AG04450 (cell line): ENCODE measurements at regions of chr12 and their contacts with region 1.

Region 1: DNA sequence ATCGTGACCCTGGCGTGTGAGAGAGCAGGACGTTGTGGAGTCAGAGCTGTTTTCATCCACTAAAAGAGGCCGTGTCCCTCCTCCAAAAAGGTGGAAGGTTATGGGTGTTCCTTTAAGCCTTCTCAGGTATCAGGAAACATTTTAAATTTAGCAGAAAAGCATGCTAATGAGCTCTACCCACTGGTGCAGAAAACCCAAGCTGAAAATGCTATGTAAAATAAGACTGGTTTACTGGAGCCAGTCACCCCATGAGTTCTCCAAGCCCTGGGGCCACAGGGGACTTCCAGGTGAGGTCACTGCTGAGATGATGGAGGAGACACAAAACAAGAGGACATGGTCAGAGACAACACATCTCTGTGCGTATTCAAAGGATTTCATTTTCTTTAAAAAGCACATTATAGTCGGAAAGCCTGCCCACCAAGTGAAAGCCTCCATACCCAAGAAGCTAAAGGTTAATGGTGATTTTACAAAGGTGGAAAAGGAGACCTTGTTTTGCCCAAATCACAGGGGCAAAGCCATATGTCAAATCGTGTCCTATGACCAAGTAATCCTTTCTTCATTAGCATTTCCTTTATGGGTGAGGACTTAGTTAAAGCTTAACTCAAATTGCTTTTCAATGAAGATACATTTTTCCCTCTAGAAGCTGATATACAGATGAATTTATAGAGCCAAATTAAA is 14.2 kb downstream of the PRKAB1 start:
- DNase-seq: no peak
- H3K4me3 ChIP-seq: no peak overlapping the region
- H3K27ac ChIP-seq: no peak overlapping the region
- H3K27me3 ChIP-seq: no peaks in the 10 kb centered on the region
- CTCF ChIP-seq: no peak

Region 2: GRCh38 chr12:119649202-119649808 is 32.8 kb before region 1 on chr12:
- CTCF ChIA-PET with region 1: no interaction called
- POLR2A ChIA-PET with region 1: no interaction called
- DNase-seq: no peak
- H3K4me3 ChIP-seq: no peak overlapping the region
- H3K27ac ChIP-seq: no peak overlapping the region
- H3K27me3 ChIP-seq: no peaks in the 10 kb centered on the region
- CTCF ChIP-seq: peak; percentile 58

Region 3: GRCh38 chr12:119667577-119668323 is 14.3 kb before region 1 on chr12 and contains the start of gene PRKAB1:
- CTCF ChIA-PET with region 1: interaction called, 25 read pairs
- POLR2A ChIA-PET with region 1: no interaction called
- DNase-seq: peak; percentile 93
- H3K4me3 ChIP-seq: peak within 1 kb of the TSS; percentile 98
- H3K27ac ChIP-seq: peak within 1 kb of the TSS; percentile 57
- H3K27me3 ChIP-seq: peaks cover 3% of the 10 kb centered on the region
- CTCF ChIP-seq: peak; percentile 84
- polyA plus RNA-seq, gene PRKAB1: 33.8 and 34.3 TPM in 2 replicates

Region 4: GRCh38 chr12:119695034-119695433 is 12.9 kb after region 1 on chr12:
- CTCF ChIA-PET with region 1: interaction called, 12 read pairs
- POLR2A ChIA-PET with region 1: no interaction called
- DNase-seq: no peak
- H3K4me3 ChIP-seq: no peak overlapping the region
- H3K27ac ChIP-seq: no peak overlapping the region
- H3K27me3 ChIP-seq: no peaks in the 10 kb centered on the region
- CTCF ChIP-seq: peak; percentile 66